IMR-90 (cell line): ENCODE measurements at regions of chrX and their contacts with region 1.

Region 1: GRCh38 chrX:42237956-42238355 is 314.6 kb upstream of the CASK start:
- DNase-seq: peak; percentile 13
- ATAC-seq: peak; percentile 87
- H3K4me3 ChIP-seq: no peak overlapping the region
- H3K27ac ChIP-seq: peak overlapping the region; percentile 32; the same call in 1 of the 2 replicates
- H3K4me1 ChIP-seq: no peaks in the 10 kb centered on the region; the same call in 1 of the 2 replicates
- H3K27me3 ChIP-seq: peaks cover 4% of the 10 kb centered on the region
- CTCF ChIP-seq: no peak
- POLR2A ChIP-seq: no peak
- RAD21 ChIP-seq: no peak

Region 2: GRCh38 chrX:41923257-41923969 is 314.5 kb before region 1 on chrX and contains the start of gene CASK:
- CTCF ChIA-PET with region 1: no interaction called
- POLR2A ChIA-PET with region 1: no interaction called
- dilution Hi-C with region 1: no loop called
- in situ Hi-C with region 1: no loop called
- intact Hi-C with region 1: loop called (anchors 2 kb)
- DNase-seq: peak; percentile 87
- ATAC-seq: peak; percentile 97
- H3K4me3 ChIP-seq: peak within 1 kb of the TSS; percentile 92
- H3K27ac ChIP-seq: peak within 1 kb of the TSS; percentile 82
- H3K4me1 ChIP-seq: no peaks in the 10 kb centered on the region
- H3K27me3 ChIP-seq: peaks cover 11% of the 10 kb centered on the region
- CTCF ChIP-seq: no peak
- POLR2A ChIP-seq: no peak
- RAD21 ChIP-seq: no peak
- total RNA-seq, gene CASK: 17.7 and 21.9 TPM in 2 replicates